CD8-positive, alpha-beta T cell (primary cell): ENCODE measurements at regions of chr5 and their contacts with region 1.

Region 1: DNA sequence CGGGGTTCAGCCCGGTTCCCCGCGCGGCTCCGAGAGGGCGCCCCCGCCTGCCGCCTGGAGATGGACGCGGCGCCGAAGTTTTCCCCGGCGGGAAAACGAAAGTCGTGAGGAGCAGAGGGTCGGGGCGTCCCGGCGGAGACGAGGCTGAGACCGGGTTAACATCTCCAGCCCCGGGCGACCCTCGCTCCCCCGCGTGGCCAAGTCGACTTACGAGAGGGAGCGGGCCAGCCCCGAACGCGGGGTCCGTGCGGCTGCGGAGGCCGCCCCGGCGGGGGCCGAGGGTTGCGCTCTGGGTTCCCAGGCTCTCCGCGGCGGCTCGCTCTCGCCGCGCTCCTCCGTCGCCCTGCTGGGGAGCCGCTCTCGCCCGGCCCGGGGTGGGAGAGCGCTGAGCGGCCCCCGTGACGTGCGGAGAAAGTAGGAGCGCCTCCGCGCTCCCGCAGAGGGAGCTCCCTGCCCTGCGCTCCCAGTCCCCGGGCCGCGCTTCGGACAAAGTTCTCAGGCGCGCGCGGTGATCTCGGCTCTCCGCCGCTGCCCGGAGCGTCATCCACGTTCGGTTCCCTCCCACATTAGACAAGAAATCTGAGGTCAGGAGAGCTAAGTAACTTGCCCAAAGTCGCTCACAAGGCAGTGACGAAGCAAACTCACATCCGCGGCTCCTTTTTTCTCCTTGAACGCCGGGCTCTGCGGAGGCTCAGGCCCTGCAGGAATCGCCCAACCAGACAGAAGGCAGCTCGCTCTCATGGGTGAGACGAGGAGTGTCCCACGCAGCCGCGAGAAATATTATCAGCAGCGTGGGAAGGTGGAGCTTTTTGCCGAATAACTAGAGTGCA is 1.2 kb upstream of the GCNT4 start:
- DNase-seq: peak; percentile 35 to 79 (median 68)
- ATAC-seq: peak; percentile 45
- H3K4me3 ChIP-seq: peak overlapping the region; percentile 65 to 71
- H3K4me3 Mint-ChIP-seq: peak overlapping the region; percentile 93
- H3K27ac ChIP-seq: peak overlapping the region; percentile 75 to 82
- H3K27ac Mint-ChIP-seq: peak overlapping the region; percentile 98
- H3K4me1 ChIP-seq: peaks cover 73% of the 10 kb centered on the region
- H3K4me1 Mint-ChIP-seq: peaks cover 84% of the 10 kb centered on the region
- H3K27me3 ChIP-seq: peaks cover 0 to 4% of the 10 kb centered on the region in 2 experiments
- H3K27me3 Mint-ChIP-seq: no peaks in the 10 kb centered on the region
- CTCF ChIP-seq: peak; percentile 5

Region 2: DNA sequence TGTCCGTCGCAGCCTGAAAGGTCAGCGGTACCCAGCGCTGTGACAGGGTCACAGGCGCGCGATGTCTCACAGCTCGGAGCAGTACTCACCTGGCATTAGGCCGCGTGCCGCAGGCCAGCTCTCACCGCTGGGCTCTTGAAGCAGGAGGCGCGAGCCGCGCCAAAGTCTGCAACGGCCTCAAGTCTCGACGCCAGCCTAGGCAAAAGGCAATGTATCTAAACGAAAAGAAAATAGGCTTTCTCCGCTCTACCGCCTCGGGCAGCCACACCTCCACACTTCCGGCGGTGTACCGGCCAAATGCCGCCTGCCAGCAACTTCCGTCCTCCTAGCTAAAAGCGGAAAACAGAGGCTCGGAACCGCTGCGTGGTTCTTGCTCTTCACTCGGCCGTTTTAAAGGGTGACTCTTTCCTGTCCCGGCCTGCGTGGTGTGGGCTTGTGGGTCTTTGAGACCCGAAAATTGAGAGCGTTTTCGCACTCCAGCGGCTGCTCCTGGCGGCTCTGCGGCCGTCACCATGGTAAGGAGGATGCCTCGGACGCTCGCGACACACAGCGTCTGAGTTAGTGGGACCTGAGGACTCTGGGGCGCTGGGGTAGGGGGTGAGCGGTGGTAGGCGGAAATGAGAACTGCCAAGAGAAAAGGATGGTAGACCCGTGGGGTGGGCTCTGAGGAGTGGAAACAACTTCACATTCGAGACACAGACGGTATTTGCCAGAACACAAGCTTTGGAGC is 286.5 kb before region 1 on chr5 and contains the starts of genes GFM2 and NSA2:
- CTCF ChIA-PET with region 1: no interaction called
- POLR2A ChIA-PET with region 1: interaction called, 3 read pairs
- intact Hi-C with region 1: loop called (anchors 5 kb)
- DNase-seq: peak; percentile 83 to 95 (median 93)
- ATAC-seq: peak; percentile 85
- H3K4me3 ChIP-seq: peak within 1 kb of the TSS; percentile 94 to 96
- H3K4me3 Mint-ChIP-seq: peak within 1 kb of the TSS; percentile 100
- H3K27ac ChIP-seq: peak within 1 kb of the TSS; percentile 70 to 84
- H3K27ac Mint-ChIP-seq: peak within 1 kb of the TSS; percentile 97
- H3K4me1 ChIP-seq: peaks cover 25% of the 10 kb centered on the region
- H3K4me1 Mint-ChIP-seq: peaks cover 39% of the 10 kb centered on the region
- H3K27me3 ChIP-seq: no peaks in the 10 kb centered on the region
- H3K27me3 Mint-ChIP-seq: no peaks in the 10 kb centered on the region
- CTCF ChIP-seq: no peak
- total RNA-seq, gene GFM2: 11.0 to 15.0 TPM
- total RNA-seq, gene NSA2: 142 TPM

Region 3: DNA sequence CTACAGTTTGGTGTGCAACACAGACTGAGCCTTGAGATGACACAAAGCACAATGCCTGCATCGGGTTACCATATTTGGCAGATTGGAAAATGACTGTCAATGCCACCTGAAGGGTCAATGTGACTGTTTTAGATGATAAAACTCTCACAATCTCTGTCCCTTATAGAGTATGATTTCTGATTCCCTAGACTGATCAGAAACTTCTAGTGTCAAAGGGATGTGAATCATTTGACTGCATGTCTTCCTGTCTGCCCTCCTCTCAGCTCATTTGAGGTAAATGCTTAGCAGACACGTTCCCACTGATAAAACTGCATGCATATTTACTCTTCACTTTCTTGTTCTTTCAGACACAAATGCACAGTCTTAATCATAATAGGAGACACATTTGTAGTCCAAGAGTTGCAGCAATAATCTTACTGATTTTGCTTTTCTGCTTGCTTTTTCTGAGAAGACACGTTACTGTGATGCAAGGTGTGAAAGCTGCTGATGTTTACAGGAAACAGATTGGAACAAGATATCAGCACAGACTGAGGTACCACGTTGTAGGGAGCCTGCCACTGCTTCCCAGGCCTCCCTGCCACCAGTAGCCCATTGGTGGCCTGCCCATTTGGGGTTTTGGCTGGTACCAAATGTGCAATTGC is 78.9 kb before region 1 on chr5:
- CTCF ChIA-PET with region 1: interaction called, 11 read pairs
- POLR2A ChIA-PET with region 1: interaction called, 4 read pairs
- intact Hi-C with region 1: no loop called
- DNase-seq: peak in 7 of 9 experiments; percentile 7 to 72 (median 42)
- ATAC-seq: peak; percentile 75
- H3K4me3 ChIP-seq: no peak overlapping the region
- H3K4me3 Mint-ChIP-seq: peak overlapping the region; percentile 38
- H3K27ac ChIP-seq: peak overlapping the region in 1 of 2 experiments; percentile 80
- H3K27ac Mint-ChIP-seq: peak overlapping the region; percentile 89
- H3K4me1 ChIP-seq: peaks cover 24% of the 10 kb centered on the region
- H3K4me1 Mint-ChIP-seq: peaks cover 45% of the 10 kb centered on the region
- H3K27me3 ChIP-seq: no peaks in the 10 kb centered on the region
- H3K27me3 Mint-ChIP-seq: no peaks in the 10 kb centered on the region
- CTCF ChIP-seq: no peak

Region 4: DNA sequence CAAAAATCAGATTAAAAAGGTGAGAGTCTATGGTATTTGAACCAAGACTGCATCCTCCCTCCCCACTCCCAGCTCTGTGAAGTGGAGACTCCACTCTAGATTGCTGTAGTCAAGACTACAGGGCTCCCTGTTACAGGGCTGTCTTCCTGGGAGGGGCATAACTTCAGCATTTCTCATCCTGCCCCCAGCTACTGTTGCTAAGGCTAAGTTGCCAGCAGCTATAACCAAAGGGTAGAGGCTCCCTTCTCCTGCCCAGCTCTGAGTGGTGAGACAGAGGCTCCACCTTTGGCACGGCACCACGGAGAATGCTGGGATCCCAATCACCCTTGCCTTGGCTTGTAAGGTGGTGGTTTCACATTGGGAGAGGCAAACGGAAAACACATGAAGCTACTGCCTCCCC is 38.1 kb after region 1 on chr5:
- CTCF ChIA-PET with region 1: interaction called, 3 read pairs
- POLR2A ChIA-PET with region 1: interaction called, 3 read pairs
- intact Hi-C with region 1: loop called in 1 of 2 experiments (anchors 5 kb)
- DNase-seq: no peak
- ATAC-seq: no peak
- H3K4me3 ChIP-seq: no peak overlapping the region
- H3K4me3 Mint-ChIP-seq: no peak overlapping the region
- H3K27ac ChIP-seq: no peak overlapping the region
- H3K27ac Mint-ChIP-seq: no peak overlapping the region
- H3K4me1 ChIP-seq: no peaks in the 10 kb centered on the region
- H3K4me1 Mint-ChIP-seq: peaks cover 20% of the 10 kb centered on the region
- H3K27me3 ChIP-seq: no peaks in the 10 kb centered on the region
- H3K27me3 Mint-ChIP-seq: no peaks in the 10 kb centered on the region
- CTCF ChIP-seq: no peak

Region 5: GRCh38 chr5:75265731-75266130 is 212.2 kb after region 1 on chr5:
- CTCF ChIA-PET with region 1: interaction called, 23 read pairs
- POLR2A ChIA-PET with region 1: interaction called, 4 read pairs
- intact Hi-C with region 1: loop called (anchors 1 kb)
- DNase-seq: peak in 2 of 9 experiments; percentile 57 to 67
- ATAC-seq: peak; percentile 78
- H3K4me3 ChIP-seq: no peak overlapping the region
- H3K4me3 Mint-ChIP-seq: no peak overlapping the region
- H3K27ac ChIP-seq: no peak overlapping the region
- H3K27ac Mint-ChIP-seq: no peak overlapping the region
- H3K4me1 ChIP-seq: no peaks in the 10 kb centered on the region
- H3K4me1 Mint-ChIP-seq: peaks cover 3% of the 10 kb centered on the region
- H3K27me3 ChIP-seq: no peaks in the 10 kb centered on the region
- H3K27me3 Mint-ChIP-seq: peaks cover 5% of the 10 kb centered on the region
- CTCF ChIP-seq: peak; percentile 68

Region 6: GRCh38 chr5:75670577-75670976 is 617.1 kb after region 1 on chr5:
- CTCF ChIA-PET with region 1: no interaction called
- POLR2A ChIA-PET with region 1: no interaction called
- intact Hi-C with region 1: loop called in 1 of 2 experiments (anchors 10 kb)
- DNase-seq: no peak
- ATAC-seq: no peak
- H3K4me3 ChIP-seq: no peak overlapping the region
- H3K4me3 Mint-ChIP-seq: no peak overlapping the region
- H3K27ac ChIP-seq: no peak overlapping the region
- H3K27ac Mint-ChIP-seq: no peak overlapping the region
- H3K4me1 ChIP-seq: peaks cover 15% of the 10 kb centered on the region
- H3K4me1 Mint-ChIP-seq: peaks cover 14% of the 10 kb centered on the region
- H3K27me3 ChIP-seq: no peaks in the 10 kb centered on the region
- H3K27me3 Mint-ChIP-seq: no peaks in the 10 kb centered on the region
- CTCF ChIP-seq: no peak

Region 7: DNA sequence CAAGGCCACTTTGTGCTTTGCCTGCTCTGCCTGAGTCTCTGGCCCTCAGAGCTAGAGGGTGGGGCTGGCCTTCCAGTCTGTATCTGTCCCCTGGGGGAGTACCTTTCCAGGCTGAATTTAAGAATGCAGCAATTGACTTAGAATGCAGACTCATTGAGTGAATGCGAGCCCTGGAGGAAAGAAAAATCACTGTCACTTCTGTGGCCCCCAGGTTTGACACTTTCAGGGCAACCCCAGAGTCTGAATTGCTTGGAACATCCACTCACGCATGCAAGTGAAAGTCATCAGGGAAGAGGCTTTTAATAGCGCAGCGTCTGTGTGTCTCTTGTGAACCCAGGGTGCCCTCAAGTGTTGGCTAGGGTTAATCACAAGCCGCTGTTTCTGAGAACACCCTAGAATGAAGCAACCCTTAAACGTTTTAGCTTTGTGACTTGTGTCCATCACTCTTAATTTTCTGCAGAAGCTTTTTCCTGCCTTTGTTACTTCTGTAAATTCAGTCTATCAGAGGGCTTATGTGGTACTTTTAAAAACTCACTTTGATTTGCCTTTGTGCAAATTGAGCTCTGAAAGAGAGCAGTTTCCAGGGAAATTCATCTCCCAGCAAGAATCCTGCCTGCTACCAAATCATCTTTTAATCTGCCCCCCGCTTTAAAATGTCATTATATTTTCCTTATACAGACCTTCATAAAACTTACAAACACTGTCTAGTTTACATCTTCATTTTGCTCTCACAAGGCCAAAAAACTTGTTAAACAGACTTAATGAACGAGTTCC is 1202.8 kb after region 1 on chr5:
- CTCF ChIA-PET with region 1: no interaction called
- POLR2A ChIA-PET with region 1: no interaction called
- intact Hi-C with region 1: loop called (anchors 10 kb)
- DNase-seq: peak; percentile 15 to 82 (median 57)
- ATAC-seq: peak; percentile 98
- H3K4me3 ChIP-seq: no peak overlapping the region
- H3K4me3 Mint-ChIP-seq: peak overlapping the region; percentile 30
- H3K27ac ChIP-seq: no peak overlapping the region
- H3K27ac Mint-ChIP-seq: no peak overlapping the region
- H3K4me1 ChIP-seq: peaks cover 3% of the 10 kb centered on the region
- H3K4me1 Mint-ChIP-seq: peaks cover 3% of the 10 kb centered on the region
- H3K27me3 ChIP-seq: peaks cover 0 to 3% of the 10 kb centered on the region in 2 experiments
- H3K27me3 Mint-ChIP-seq: peaks cover 9% of the 10 kb centered on the region
- CTCF ChIP-seq: peak; percentile 62

Region 8: GRCh38 chr5:76319673-76320072 is 1266.2 kb after region 1 on chr5:
- CTCF ChIA-PET with region 1: no interaction called
- POLR2A ChIA-PET with region 1: no interaction called
- intact Hi-C with region 1: no loop called
- DNase-seq: no peak
- ATAC-seq: no peak
- H3K4me3 ChIP-seq: no peak overlapping the region
- H3K4me3 Mint-ChIP-seq: no peak overlapping the region
- H3K27ac ChIP-seq: no peak overlapping the region
- H3K27ac Mint-ChIP-seq: no peak overlapping the region
- H3K4me1 ChIP-seq: no peaks in the 10 kb centered on the region
- H3K4me1 Mint-ChIP-seq: peaks cover 8% of the 10 kb centered on the region
- H3K27me3 ChIP-seq: no peaks in the 10 kb centered on the region
- H3K27me3 Mint-ChIP-seq: no peaks in the 10 kb centered on the region
- CTCF ChIP-seq: no peak